CD4-positive, alpha-beta memory T cell (primary cell): ENCODE measurements at regions of chr10 and their contacts with region 1.

Region 1: DNA sequence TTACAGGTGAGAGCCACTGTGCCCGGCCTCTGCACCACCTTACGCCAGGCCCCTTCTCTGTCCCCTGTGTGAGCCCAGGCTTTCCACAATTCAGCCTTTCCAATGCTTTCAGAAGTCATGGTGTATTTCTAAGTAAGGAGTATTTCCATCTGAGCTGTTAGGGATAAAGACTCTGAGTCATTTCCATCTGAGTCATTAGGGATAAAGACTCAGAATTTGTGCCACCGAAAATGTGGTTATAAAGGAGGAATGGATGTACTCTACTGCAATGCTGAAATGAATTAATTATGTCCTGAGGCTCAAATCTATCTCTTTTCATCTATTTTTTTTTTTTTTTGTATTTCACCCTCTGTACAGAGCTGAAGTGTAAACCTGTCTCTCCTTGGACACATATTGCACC is 84.0 kb downstream of the GATA3 start:
- DNase-seq: no peak
- H3K4me3 ChIP-seq: no peak overlapping the region
- H3K4me3 Mint-ChIP-seq: peak overlapping the region in 7 of 8 donors; percentile 21 to 82 (median 64)
- H3K27ac ChIP-seq: no peak overlapping the region
- H3K27ac Mint-ChIP-seq: peak overlapping the region in 6 of 7 donors; percentile 65 to 98 (median 87)
- H3K4me1 ChIP-seq: peaks cover 28% of the 10 kb centered on the region
- H3K4me1 Mint-ChIP-seq: peaks cover 24 to 43% (median 33%) of the 10 kb centered on the region in 4 donors
- H3K27me3 ChIP-seq: no peaks in the 10 kb centered on the region
- H3K27me3 Mint-ChIP-seq: no peaks in the 10 kb centered on the region

Region 2: DNA sequence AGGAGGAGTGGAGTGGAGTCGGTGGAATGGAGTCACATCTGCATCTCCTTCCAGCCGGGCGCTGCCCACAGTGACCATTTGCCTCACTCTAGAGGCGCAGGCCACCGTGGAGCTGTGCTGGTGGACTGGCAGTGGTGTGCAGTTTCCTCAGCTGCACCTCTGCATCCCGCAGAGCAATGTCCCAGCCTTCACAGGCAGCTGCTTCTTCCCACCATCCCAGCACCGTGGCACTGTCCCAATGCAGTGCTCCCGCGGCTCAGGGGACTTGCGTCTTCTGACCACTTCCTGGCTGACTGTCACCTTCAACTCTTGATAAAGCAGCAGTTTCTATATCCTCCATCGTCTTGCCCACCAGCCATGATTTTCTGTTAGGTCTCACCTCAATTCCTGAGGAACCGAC is 637.3 kb before region 1 on chr10:
- CTCF ChIA-PET with region 1: no interaction called
- POLR2A ChIA-PET with region 1: no interaction called
- intact Hi-C with region 1: no loop called
- DNase-seq: no peak
- H3K4me3 ChIP-seq: no peak overlapping the region
- H3K4me3 Mint-ChIP-seq: no peak overlapping the region
- H3K27ac ChIP-seq: no peak overlapping the region
- H3K27ac Mint-ChIP-seq: peak overlapping the region in 4 of 7 donors; percentile 24 to 64 (median 36)
- H3K4me1 ChIP-seq: peaks cover 8% of the 10 kb centered on the region
- H3K4me1 Mint-ChIP-seq: peaks cover 7 to 19% (median 16%) of the 10 kb centered on the region in 4 donors
- H3K27me3 ChIP-seq: no peaks in the 10 kb centered on the region
- H3K27me3 Mint-ChIP-seq: no peaks in the 10 kb centered on the region

Region 3: GRCh38 chr10:8103543-8103942 is 34.9 kb before region 1 on chr10:
- CTCF ChIA-PET with region 1: no interaction called
- POLR2A ChIA-PET with region 1: no interaction called
- intact Hi-C with region 1: no loop called
- DNase-seq: no peak
- H3K4me3 ChIP-seq: no peak overlapping the region
- H3K4me3 Mint-ChIP-seq: no peak overlapping the region
- H3K27ac ChIP-seq: no peak overlapping the region
- H3K27ac Mint-ChIP-seq: no peak overlapping the region
- H3K4me1 ChIP-seq: no peaks in the 10 kb centered on the region
- H3K4me1 Mint-ChIP-seq: peaks cover 0 to 6% (median 0%) of the 10 kb centered on the region in 4 donors
- H3K27me3 ChIP-seq: no peaks in the 10 kb centered on the region
- H3K27me3 Mint-ChIP-seq: no peaks in the 10 kb centered on the region

Region 4: DNA sequence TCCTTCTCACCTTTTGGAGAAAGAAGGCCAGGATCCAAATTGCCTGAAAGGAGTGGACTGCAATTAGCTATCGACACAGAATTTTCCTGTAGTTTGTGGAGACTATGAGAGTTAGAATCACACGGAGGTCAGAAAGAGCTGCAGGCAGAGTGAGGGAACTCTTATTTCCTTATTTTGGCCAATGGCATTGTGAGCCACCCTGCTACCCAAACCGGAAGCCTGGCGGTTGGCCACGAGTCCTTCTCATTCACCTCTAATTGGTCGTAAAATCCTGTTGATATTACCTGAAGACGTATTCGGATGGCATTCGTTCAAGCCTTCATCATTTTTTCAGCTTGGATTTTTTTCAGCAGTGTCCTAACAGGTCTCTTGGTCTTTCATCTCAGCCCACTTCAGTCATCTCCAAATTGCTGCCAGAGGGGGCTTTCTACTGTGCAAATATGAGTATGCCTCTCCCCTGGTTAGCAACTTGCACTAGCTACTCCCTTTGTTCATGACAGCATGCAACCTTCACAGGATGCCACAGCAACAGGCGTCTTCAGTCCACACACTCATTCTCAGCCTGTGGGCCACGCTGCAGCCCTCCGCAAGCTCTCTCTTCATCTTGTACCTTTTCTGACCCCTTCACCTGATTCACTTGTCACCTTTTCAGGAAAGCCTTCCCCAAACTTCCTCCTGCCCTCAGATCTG is 17.1 kb before region 1 on chr10:
- CTCF ChIA-PET with region 1: no interaction called
- POLR2A ChIA-PET with region 1: no interaction called
- intact Hi-C with region 1: no loop called
- DNase-seq: no peak
- H3K4me3 ChIP-seq: no peak overlapping the region
- H3K4me3 Mint-ChIP-seq: peak overlapping the region in 1 of 8 donors; percentile 24
- H3K27ac ChIP-seq: no peak overlapping the region
- H3K27ac Mint-ChIP-seq: peak overlapping the region in 1 of 7 donors; percentile 13
- H3K4me1 ChIP-seq: no peaks in the 10 kb centered on the region
- H3K4me1 Mint-ChIP-seq: peaks cover 0 to 5% (median 1%) of the 10 kb centered on the region in 4 donors
- H3K27me3 ChIP-seq: no peaks in the 10 kb centered on the region
- H3K27me3 Mint-ChIP-seq: no peaks in the 10 kb centered on the region

Region 5: GRCh38 chr10:8183241-8183704 is 44.8 kb after region 1 on chr10:
- CTCF ChIA-PET with region 1: interaction called, 3 read pairs
- POLR2A ChIA-PET with region 1: interaction called, 17 read pairs
- intact Hi-C with region 1: loop called (anchors 5 kb)
- DNase-seq: peak; percentile 64 to 83 (median 76)
- H3K4me3 ChIP-seq: no peak overlapping the region
- H3K4me3 Mint-ChIP-seq: peak overlapping the region; percentile 57 to 86 (median 64)
- H3K27ac ChIP-seq: peak overlapping the region; percentile 60
- H3K27ac Mint-ChIP-seq: peak overlapping the region; percentile 87 to 98 (median 90)
- H3K4me1 ChIP-seq: peaks cover 34% of the 10 kb centered on the region
- H3K4me1 Mint-ChIP-seq: peaks cover 23 to 44% (median 35%) of the 10 kb centered on the region in 4 donors
- H3K27me3 ChIP-seq: no peaks in the 10 kb centered on the region
- H3K27me3 Mint-ChIP-seq: no peaks in the 10 kb centered on the region

Region 6: DNA sequence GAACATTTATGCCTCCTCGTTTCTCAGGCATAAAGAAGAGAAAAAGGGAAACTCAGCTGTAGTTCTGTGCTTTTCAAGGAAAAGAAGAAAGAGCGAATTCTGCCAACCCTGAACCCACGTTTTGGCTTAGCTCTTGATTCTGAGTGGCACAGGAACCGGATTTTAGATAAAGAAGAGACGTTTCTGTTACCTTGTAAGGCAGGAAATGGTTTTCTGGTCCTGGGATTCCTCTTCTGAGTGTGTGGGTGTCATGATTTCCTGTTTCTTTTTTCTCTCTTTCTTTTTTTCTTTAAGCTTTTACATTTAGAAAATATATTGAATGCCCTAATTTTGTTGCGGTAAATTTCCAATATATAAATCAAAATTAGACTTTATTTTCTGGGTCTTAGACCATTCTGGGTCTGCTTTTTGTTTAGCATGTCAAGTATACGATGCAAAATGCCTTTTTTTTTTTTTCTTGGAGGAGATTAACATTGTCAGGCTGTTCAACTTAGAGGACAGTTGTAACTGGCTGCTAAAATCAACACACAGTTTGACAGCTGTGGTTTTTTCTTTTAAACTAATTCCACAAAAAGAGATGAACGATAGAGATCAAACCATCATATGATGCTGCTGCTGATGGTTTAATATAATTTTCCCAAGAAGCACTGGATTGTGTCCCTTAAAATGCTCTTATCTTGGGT is 106.8 kb after region 1 on chr10:
- CTCF ChIA-PET with region 1: interaction called, 3 read pairs
- POLR2A ChIA-PET with region 1: interaction called, 6 read pairs
- intact Hi-C with region 1: loop called (anchors 5 kb)
- DNase-seq: peak in 4 of 5 donors; percentile 55 to 64 (median 59)
- H3K4me3 ChIP-seq: peak overlapping the region in 1 of 2 donors; percentile 34
- H3K4me3 Mint-ChIP-seq: peak overlapping the region; percentile 51 to 90 (median 74)
- H3K27ac ChIP-seq: peak overlapping the region; percentile 41
- H3K27ac Mint-ChIP-seq: peak overlapping the region; percentile 75 to 95 (median 93)
- H3K4me1 ChIP-seq: peaks cover 52% of the 10 kb centered on the region
- H3K4me1 Mint-ChIP-seq: peaks cover 39 to 74% (median 55%) of the 10 kb centered on the region in 4 donors
- H3K27me3 ChIP-seq: no peaks in the 10 kb centered on the region
- H3K27me3 Mint-ChIP-seq: no peaks in the 10 kb centered on the region